ENCODE measurements at regions of chr3 and their contacts with region 1.

Region 1: GRCh38 chr3:138068579-138069174 is 46.7 kb downstream of the DZIP1L start:
- DNase-seq: peak; percentile 55
- H3K4me3 Mint-ChIP-seq: no peak overlapping the region
- H3K27ac Mint-ChIP-seq: no peak overlapping the region
- H3K4me1 Mint-ChIP-seq: peaks cover 23% of the 10 kb centered on the region
- H3K27me3 Mint-ChIP-seq: peaks cover 29% of the 10 kb centered on the region

Region 2: GRCh38 chr3:138082085-138082991 is 13.7 kb after region 1 on chr3:
- intact Hi-C with region 1: loop called (anchors 1 kb)
- DNase-seq: no peak
- H3K4me3 Mint-ChIP-seq: peak overlapping the region; percentile 19
- H3K27ac Mint-ChIP-seq: peak overlapping the region; percentile 48
- H3K4me1 Mint-ChIP-seq: peaks cover 41% of the 10 kb centered on the region
- H3K27me3 Mint-ChIP-seq: peaks cover 8% of the 10 kb centered on the region

Region 3: GRCh38 chr3:138118612-138119422 is 50.1 kb after region 1 on chr3:
- intact Hi-C with region 1: loop called (anchors 1 kb)
- DNase-seq: peak; percentile 36
- H3K4me3 Mint-ChIP-seq: no peak overlapping the region
- H3K27ac Mint-ChIP-seq: no peak overlapping the region
- H3K4me1 Mint-ChIP-seq: peaks cover 5% of the 10 kb centered on the region
- H3K27me3 Mint-ChIP-seq: peaks cover 30% of the 10 kb centered on the region

Region 4: GRCh38 chr3:138174421-138175122 is 105.9 kb after region 1 on chr3 and contains the start of gene DBR1:
- intact Hi-C with region 1: loop called (anchors 5 kb)
- DNase-seq: peak; percentile 66
- H3K4me3 Mint-ChIP-seq: peak within 1 kb of the TSS; percentile 94
- H3K27ac Mint-ChIP-seq: peak within 1 kb of the TSS; percentile 92
- H3K4me1 Mint-ChIP-seq: peaks cover 29% of the 10 kb centered on the region
- H3K27me3 Mint-ChIP-seq: peaks cover 4% of the 10 kb centered on the region
- total RNA-seq, gene DBR1: 22.0 and 22.3 TPM in 2 replicates

Region 5: DNA sequence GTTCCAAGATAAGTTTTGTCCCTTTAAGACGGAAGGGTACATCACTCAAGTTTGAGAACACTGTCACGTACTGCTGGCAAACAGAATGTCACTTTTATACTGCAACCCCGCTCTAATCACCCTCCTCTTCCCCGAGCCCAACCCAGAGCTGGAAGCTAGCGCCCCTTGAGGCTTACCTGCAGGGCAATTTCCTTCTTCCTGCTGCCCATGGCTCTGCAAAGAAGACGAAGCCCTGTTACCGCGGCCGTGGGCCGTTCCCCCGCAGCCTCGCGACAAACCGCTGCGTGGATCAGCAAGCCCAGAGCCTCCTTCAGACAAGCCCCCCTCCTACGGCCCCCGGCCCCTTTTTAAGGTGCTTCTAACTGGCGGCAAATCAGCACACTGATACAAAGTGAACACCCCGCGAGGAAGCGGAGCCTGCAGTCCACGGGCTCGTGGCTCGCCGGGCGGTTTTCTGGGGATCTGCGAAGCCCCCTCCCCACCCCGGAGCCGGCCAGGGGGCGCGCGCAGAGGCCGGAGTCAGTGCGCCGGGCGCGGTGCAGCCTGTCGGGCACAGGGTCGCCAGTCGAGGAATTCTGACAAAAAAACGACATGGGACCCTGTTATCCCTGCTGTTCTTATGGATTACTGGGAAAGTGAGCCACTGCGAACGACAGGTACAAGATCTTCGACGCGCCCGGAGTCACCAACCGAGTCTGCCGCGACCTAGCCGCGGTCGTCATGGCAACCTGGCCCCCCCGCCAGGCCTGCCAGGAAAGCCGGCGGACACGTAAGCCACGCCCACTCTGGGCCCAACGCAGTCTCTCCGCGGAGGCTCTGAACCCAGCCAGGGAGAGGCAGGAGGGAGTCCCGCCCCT is 260.7 kb after region 1 on chr3 and contains the start of gene NME9:
- intact Hi-C with region 1: loop called (anchors 5 kb)
- DNase-seq: peak; percentile 77
- H3K4me3 Mint-ChIP-seq: peak within 1 kb of the TSS; percentile 83
- H3K27ac Mint-ChIP-seq: peak within 1 kb of the TSS; percentile 63
- H3K4me1 Mint-ChIP-seq: peaks cover 19% of the 10 kb centered on the region
- H3K27me3 Mint-ChIP-seq: peaks cover 13% of the 10 kb centered on the region
- total RNA-seq, gene NME9: 0.30 TPM in 1 of 2 replicates, not detected in the other